ENCODE measurements at regions of chr3 and their contacts with region 1.

Region 1: DNA sequence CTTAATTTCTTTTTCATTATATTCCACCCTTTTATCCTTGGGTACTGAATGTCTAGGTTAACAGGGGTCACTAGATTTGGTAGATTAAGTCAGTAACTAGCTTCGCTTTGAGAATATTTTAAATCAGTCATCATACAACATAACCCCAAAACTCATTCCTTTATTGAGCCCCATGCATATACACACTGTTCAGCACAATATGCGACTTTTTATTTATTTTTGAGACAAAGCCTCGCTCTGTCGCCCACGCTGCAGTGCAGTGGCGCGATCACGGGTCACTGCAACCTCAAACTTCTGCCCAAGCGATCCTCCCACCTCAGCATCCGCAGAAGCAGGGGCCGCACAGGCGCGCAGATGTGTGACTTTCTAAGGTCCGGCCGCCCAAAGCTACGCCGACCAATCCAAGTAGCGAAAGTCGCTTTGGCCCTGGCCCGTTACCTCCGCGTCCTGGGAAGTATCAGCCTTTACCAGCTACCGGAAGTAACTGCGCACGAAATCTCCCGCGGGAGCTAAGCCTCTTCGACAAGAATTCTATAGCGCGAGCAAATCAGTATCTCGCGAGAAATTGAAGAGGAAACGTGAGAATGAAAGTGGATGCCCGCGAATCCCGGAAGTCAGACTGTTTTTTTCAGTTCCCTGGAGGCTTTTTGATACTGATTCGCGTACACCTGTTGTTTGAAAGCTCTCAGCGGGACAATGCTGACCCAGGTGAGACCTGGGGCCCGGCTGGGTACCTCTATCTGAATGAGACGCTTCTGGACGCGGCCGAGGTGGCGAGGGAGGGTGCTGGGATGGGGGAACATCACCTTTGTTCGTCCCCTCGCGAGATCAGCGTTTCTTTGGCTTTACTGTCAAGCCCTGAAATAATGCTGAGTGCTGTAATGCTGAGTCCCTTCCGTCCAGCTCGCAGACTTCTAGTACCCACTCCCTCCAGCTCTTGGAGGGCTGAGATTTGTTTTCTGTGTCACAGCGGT is at the starts of genes DHFR2 and NSUN3:
- DNase-seq: peak; percentile 97
- total RNA-seq, gene DHFR2: 5.2 to 7.1 TPM
- total RNA-seq, gene NSUN3: 11.8 to 12.1 TPM

Region 2: GRCh38 chr3:93979833-93980676 is 82.7 kb before region 1 on chr3 and contains the start of gene ARL13B:
- intact Hi-C with region 1: loop called in 1 of 2 experiments (anchors 10 kb)
- DNase-seq: peak; percentile 99
- total RNA-seq, gene ARL13B: 12.3 to 14.0 TPM

Region 3: DNA sequence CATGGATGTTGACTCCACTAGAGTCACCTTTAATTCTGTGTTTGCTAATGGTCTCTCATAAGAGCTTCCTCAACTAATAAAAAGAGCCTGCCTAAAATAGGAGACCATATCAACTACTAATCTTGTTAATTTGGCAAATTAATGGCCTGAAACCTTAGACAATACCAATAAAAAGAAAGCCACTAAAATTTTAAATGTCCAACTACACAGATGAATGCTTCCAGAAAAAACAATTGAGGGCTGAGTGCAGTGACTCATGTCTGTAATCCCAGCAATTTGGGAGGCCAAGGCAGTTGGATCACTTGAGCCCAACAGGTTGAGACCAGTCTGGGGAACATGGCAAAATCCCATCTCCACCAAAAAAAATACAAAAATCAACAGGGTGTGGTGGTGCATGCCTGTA is 231.1 kb after region 1 on chr3:
- intact Hi-C with region 1: no loop called
- DNase-seq: no peak